Dorsolateral prefrontal cortex (tissue), 120 donors: ENCODE measurements at regions of chr21 and their contacts with region 1.

Region 1: GRCh38 chr21:36927719-36928117 is 38.8 kb downstream of the HLCS start:
- DNase-seq: peak; percentile 81 to 95 (median 86)
- H3K4me3 ChIP-seq: no peak overlapping the region
- H3K27ac ChIP-seq: no peak overlapping the region
- H3K27me3 ChIP-seq: no peaks in the 10 kb centered on the region
- CTCF ChIP-seq: peak; percentile 63 to 99 (median 94)

Region 2: GRCh38 chr21:36429947-36430546 is 497.7 kb before region 1 on chr21:
- intact Hi-C with region 1: loop called in 1 of 2 experiments (anchors 10 kb)
- DNase-seq: peak in 1 of 10 donors; percentile 53
- H3K4me3 ChIP-seq: peak overlapping the region in 31 of 59 donors; percentile 5 to 50 (median 24)
- H3K27ac ChIP-seq: peak overlapping the region in 38 of 59 donors; percentile 9 to 80 (median 53)
- H3K27me3 ChIP-seq: no peaks in the 10 kb centered on the region
- CTCF ChIP-seq: no peak

Region 3: GRCh38 chr21:36504067-36505058 is 423.4 kb before region 1 on chr21:
- intact Hi-C with region 1: loop called (anchors 1 to 5 kb)
- DNase-seq: peak in 2 of 10 donors; percentile 37 to 43
- H3K4me3 ChIP-seq: no peak overlapping the region
- H3K27ac ChIP-seq: no peak overlapping the region
- H3K27me3 ChIP-seq: peaks cover 0 to under 1% (median 0%) of the 10 kb centered on the region in 45 donors
- CTCF ChIP-seq: peak; percentile 83 to 99 (median 95)

Region 4: GRCh38 chr21:36661511-36662309 is 266.0 kb before region 1 on chr21:
- intact Hi-C with region 1: loop called (anchors 5 kb)
- DNase-seq: peak in 2 of 10 donors; percentile 9 to 45
- H3K4me3 ChIP-seq: no peak overlapping the region
- H3K27ac ChIP-seq: no peak overlapping the region
- H3K27me3 ChIP-seq: peaks cover 0 to 47% (median 13%) of the 10 kb centered on the region in 45 donors
- CTCF ChIP-seq: peak in 51 of 56 donors; percentile 10 to 70 (median 43)

Region 5: DNA sequence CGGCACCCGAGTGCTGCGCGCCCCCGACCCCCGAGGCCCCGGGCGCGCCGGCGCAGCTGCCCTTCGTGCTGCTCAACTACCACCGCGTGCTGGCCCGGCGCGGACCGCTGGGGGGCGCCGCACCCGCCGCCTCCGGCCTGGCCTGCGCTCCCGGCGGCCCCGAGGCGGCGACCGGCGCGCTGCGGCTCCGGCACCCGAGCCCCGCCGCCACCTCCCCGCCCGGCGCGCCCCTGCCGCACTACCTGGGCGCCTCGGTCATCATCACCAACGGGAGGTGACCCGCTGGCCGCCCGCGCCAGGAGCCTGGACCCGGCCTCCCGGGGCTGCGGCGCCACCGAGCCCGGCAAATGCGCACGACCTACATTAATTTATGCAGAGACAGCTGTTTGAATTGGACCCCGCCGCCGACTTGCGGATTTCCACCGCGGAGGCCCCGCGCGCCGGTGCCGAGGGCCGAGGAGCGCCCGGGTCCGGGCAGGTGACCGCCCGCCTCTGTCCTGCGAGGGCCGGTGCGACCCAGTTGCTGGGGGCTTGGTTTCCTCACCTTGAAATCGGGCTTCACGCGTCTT is 179.8 kb before region 1 on chr21:
- intact Hi-C with region 1: loop called in 1 of 2 experiments (anchors 5 kb)
- DNase-seq: peak in 9 of 10 donors; percentile 42 to 80 (median 55)
- H3K4me3 ChIP-seq: peak overlapping the region; percentile 43 to 79 (median 66)
- H3K27ac ChIP-seq: peak overlapping the region in 20 of 59 donors; percentile 28 to 83 (median 60)
- H3K27me3 ChIP-seq: no peaks in the 10 kb centered on the region
- CTCF ChIP-seq: peak in 15 of 56 donors; percentile 1 to 36 (median 13)